Heart left ventricle (tissue), 16 donors: ENCODE measurements at regions of chr2 and their contacts with region 1.

Region 1: DNA sequence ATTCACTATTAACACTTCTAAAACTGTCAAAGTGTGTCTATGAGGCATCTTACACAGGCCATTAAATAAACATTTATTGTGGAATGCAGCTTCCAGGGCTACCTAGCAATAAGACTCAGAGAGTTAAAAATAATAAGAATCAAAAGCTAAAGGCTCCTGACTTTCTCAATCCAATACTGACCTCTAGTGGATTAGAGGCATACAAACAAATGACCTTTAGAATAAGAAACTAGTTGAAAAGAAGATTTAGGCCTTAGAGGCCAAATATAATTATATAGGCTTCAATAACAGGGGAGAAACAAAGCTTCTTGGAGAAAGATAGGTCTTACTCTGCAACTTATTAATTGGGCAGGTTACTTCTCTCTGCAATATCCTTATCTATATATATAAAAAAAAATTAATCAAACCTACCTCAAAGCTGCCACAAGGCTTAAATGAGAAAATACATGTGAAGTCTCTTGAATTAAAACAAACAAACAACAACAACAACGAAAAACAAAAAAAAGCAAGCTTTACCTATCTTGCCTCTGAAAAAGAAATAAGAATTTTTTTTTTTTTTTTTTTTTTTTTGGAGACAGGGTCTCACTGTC is 246.1 kb downstream of the EXOC6B start:
- DNase-seq: no peak
- ATAC-seq: peak in 2 of 4 donors; percentile 47 to 75
- H3K4me3 ChIP-seq: no peak overlapping the region
- H3K27ac ChIP-seq: no peak overlapping the region
- H3K4me1 ChIP-seq: peaks cover 0 to 31% (median 12%) of the 10 kb centered on the region in 12 donors
- H3K27me3 ChIP-seq: no peaks in the 10 kb centered on the region
- CTCF ChIP-seq: peak; percentile 44 to 83 (median 69)
- POLR2A ChIP-seq: no peak

Region 2: GRCh38 chr2:71536226-71536671 is 1043.4 kb before region 1 on chr2:
- intact Hi-C with region 1: loop called in 3 of 10 experiments (anchors 5 to 10 kb)
- DNase-seq: no peak
- ATAC-seq: peak in 1 of 4 donors; percentile 24
- H3K4me3 ChIP-seq: no peak overlapping the region
- H3K27ac ChIP-seq: no peak overlapping the region
- H3K4me1 ChIP-seq: no peaks in the 10 kb centered on the region
- H3K27me3 ChIP-seq: no peaks in the 10 kb centered on the region
- CTCF ChIP-seq: no peak
- POLR2A ChIP-seq: no peak

Region 3: GRCh38 chr2:71923887-71924533 is 655.7 kb before region 1 on chr2:
- intact Hi-C with region 1: loop called in 9 of 10 experiments (anchors 5 to 10 kb)
- DNase-seq: peak in 3 of 5 donors; percentile 53 to 68 (median 59)
- ATAC-seq: peak; percentile 37 to 83 (median 74)
- H3K4me3 ChIP-seq: no peak overlapping the region
- H3K27ac ChIP-seq: no peak overlapping the region
- H3K4me1 ChIP-seq: no peaks in the 10 kb centered on the region
- H3K27me3 ChIP-seq: no peaks in the 10 kb centered on the region
- CTCF ChIP-seq: peak; percentile 77 to 87 (median 84)
- POLR2A ChIP-seq: no peak

Region 4: DNA sequence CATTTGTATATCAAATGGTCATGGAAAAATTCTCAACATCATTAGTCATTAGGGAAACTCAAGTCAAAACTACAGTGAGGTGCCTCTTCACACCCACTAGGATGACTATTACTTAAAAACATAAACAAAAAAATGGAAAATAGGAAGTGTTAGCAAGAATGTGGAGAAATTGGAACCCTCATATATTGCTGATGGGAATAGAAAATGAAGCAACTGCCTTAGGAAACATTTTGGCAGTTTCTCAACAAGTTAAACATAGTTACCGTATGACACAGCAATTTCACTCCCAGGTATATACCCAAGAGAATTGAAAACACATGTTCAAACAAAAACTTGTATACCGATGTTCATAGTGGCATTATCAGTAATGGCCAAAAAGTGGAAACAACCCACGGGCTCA is 413.9 kb before region 1 on chr2:
- intact Hi-C with region 1: loop called in 1 of 10 experiments (anchors 10 kb)
- DNase-seq: no peak
- ATAC-seq: no peak
- H3K4me3 ChIP-seq: no peak overlapping the region
- H3K27ac ChIP-seq: no peak overlapping the region
- H3K4me1 ChIP-seq: no peaks in the 10 kb centered on the region
- H3K27me3 ChIP-seq: no peaks in the 10 kb centered on the region
- CTCF ChIP-seq: no peak
- POLR2A ChIP-seq: no peak

Region 5: GRCh38 chr2:72738096-72738495 is 158.4 kb after region 1 on chr2:
- intact Hi-C with region 1: loop called in 1 of 10 experiments (anchors 10 kb)
- DNase-seq: no peak
- ATAC-seq: no peak
- H3K4me3 ChIP-seq: no peak overlapping the region
- H3K27ac ChIP-seq: no peak overlapping the region
- H3K4me1 ChIP-seq: no peaks in the 10 kb centered on the region
- H3K27me3 ChIP-seq: no peaks in the 10 kb centered on the region
- CTCF ChIP-seq: no peak
- POLR2A ChIP-seq: no peak

Region 6: GRCh38 chr2:72770879-72771461 is 191.3 kb after region 1 on chr2:
- intact Hi-C with region 1: no loop called
- DNase-seq: peak in 2 of 5 donors; percentile 64 to 66
- ATAC-seq: peak in 3 of 4 donors; percentile 54 to 70 (median 66)
- H3K4me3 ChIP-seq: no peak overlapping the region
- H3K27ac ChIP-seq: no peak overlapping the region
- H3K4me1 ChIP-seq: peaks cover 0 to 10% (median 0%) of the 10 kb centered on the region in 12 donors
- H3K27me3 ChIP-seq: no peaks in the 10 kb centered on the region
- CTCF ChIP-seq: peak; percentile 77 to 94 (median 91)
- POLR2A ChIP-seq: no peak